Mammary epithelial cell (primary cell): ENCODE measurements at regions of chr7 and their contacts with region 1.

Region 1: DNA sequence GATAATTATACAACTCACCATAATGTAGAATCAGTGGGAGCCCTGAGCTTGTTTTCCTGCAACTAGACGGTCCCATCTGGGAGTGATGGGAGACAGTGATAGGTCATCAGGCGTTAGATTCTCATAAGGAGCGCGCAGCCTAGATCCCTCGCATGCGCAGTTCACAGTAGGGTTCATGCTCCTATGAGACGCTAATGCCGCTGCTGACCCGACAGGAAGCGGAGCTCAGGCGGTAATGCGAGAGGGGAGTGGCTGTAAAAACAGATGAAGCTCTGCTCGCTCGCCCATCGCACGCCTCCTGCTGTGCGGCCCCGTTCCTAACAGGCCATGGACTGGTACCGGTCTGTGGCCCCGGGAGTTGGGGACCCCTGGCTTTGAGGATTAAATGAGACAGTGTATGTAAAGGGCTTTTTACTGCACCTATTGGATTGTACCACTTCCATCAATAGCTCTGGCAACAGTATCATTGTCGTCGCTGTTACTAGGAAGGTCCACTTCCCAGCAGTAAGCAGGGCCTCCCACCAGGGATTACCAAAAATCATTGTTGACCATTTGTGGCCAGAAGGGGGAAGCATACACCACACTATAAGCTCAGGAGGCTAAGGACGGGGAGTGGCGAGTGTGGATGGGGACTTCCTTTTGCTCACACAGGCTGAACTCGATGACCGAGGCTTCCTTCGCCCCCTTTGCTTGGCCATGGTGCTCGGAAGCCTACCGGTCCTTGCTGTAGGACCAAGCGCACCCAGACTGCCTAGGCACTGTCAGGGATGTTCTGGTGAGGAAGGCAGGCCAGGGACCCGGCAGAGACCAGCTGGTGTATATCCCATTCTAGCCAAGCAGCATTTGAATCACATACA is 26.4 kb downstream of the AKR1B1 start:
- DNase-seq: peak; percentile 91
- H3K4me3 ChIP-seq: peak overlapping the region; percentile 35 to 45 (median 45)
- H3K27ac ChIP-seq: peak overlapping the region; percentile 68
- H3K4me1 ChIP-seq: peaks cover 22% of the 10 kb centered on the region
- H3K27me3 ChIP-seq: no peaks in the 10 kb centered on the region
- CTCF ChIP-seq: peak; percentile 54 to 62

Region 2: GRCh38 chr7:134371536-134371935 is 61.0 kb before region 1 on chr7:
- CTCF ChIA-PET with region 1: no interaction called
- dilution Hi-C with region 1: no loop called
- in situ Hi-C with region 1: no loop called
- intact Hi-C with region 1: no loop called
- DNase-seq: peak; percentile 30
- H3K4me3 ChIP-seq: no peak overlapping the region
- H3K27ac ChIP-seq: no peak overlapping the region
- H3K4me1 ChIP-seq: peaks cover 24% of the 10 kb centered on the region
- H3K27me3 ChIP-seq: no peaks in the 10 kb centered on the region
- CTCF ChIP-seq: no peak

Region 3: GRCh38 chr7:134458806-134459698 is 26.5 kb after region 1 on chr7 and contains the start of gene AKR1B1:
- CTCF ChIA-PET with region 1: interaction called, 5 read pairs
- dilution Hi-C with region 1: no loop called
- in situ Hi-C with region 1: no loop called
- intact Hi-C with region 1: loop called (anchors 1 kb)
- DNase-seq: peak; percentile 86
- H3K4me3 ChIP-seq: peak within 1 kb of the TSS; percentile 62 to 71 (median 68)
- H3K27ac ChIP-seq: peak within 1 kb of the TSS; percentile 58
- H3K4me1 ChIP-seq: peaks cover 19% of the 10 kb centered on the region
- H3K27me3 ChIP-seq: no peaks in the 10 kb centered on the region
- CTCF ChIP-seq: peak; percentile 34 to 57
- total RNA-seq, gene AKR1B1: 78.9 to 137 TPM

Region 4: DNA sequence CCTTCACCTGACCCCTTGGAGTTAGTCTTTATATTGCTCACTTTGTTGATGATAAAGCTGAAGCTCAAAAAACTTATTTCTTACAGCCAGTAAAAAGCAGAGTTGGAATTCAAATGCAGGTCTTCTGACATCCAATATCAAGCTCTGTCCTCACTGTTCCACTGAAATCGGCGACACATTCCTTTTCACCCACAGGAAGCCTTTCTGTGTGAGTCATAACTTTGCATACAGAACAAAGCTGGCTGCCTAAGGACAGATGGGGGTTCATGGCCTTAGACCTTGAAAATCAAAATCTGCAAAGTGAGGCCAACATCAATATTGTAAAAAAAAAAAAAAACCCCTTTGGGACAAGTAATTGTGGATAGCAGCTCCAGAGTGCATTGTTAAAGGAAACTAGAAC is 48.2 kb after region 1 on chr7:
- CTCF ChIA-PET with region 1: interaction called, 11 read pairs
- dilution Hi-C with region 1: no loop called
- in situ Hi-C with region 1: no loop called
- intact Hi-C with region 1: loop called (anchors 1 kb)
- DNase-seq: peak; percentile 36
- H3K4me3 ChIP-seq: no peak overlapping the region
- H3K27ac ChIP-seq: no peak overlapping the region
- H3K4me1 ChIP-seq: peaks cover 15% of the 10 kb centered on the region
- H3K27me3 ChIP-seq: no peaks in the 10 kb centered on the region
- CTCF ChIP-seq: no peak

Region 5: GRCh38 chr7:134504660-134505164 is 72.2 kb after region 1 on chr7:
- CTCF ChIA-PET with region 1: interaction called, 3 read pairs
- dilution Hi-C with region 1: no loop called
- in situ Hi-C with region 1: loop called in 1 of 2 experiments (anchors 5 kb)
- intact Hi-C with region 1: no loop called
- DNase-seq: no peak
- H3K4me3 ChIP-seq: no peak overlapping the region
- H3K27ac ChIP-seq: no peak overlapping the region
- H3K4me1 ChIP-seq: peaks cover 11% of the 10 kb centered on the region
- H3K27me3 ChIP-seq: no peaks in the 10 kb centered on the region
- CTCF ChIP-seq: no peak

Region 6: GRCh38 chr7:134547397-134548054 is 115.0 kb after region 1 on chr7:
- CTCF ChIA-PET with region 1: interaction called, 6 read pairs
- dilution Hi-C with region 1: no loop called
- in situ Hi-C with region 1: no loop called
- intact Hi-C with region 1: loop called (anchors 1 kb)
- DNase-seq: peak; percentile 72
- H3K4me3 ChIP-seq: peak overlapping the region; percentile 36 to 45 (median 42)
- H3K27ac ChIP-seq: peak overlapping the region; percentile 70
- H3K4me1 ChIP-seq: peaks cover 22% of the 10 kb centered on the region
- H3K27me3 ChIP-seq: no peaks in the 10 kb centered on the region
- CTCF ChIP-seq: peak; percentile 82 to 86

Region 7: DNA sequence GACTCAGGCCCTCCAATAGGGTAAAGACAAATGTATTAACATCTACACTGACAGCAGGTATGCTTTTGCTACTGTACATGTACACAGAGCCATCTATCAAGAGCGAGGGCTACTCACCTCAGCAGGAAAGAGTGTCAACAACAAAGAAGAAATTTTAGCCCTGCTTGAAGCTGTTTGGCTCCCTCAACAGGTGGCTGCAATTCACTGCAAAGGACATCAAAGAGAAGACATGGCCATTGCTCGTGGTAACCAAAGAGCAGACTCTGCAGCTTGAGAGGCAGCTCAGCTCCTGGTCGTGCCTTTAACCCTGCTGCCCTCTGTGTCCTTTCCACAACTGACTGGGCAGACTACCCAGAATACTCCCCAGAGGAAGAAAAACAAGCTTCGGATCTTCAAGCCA is 121.5 kb after region 1 on chr7:
- CTCF ChIA-PET with region 1: interaction called, 6 read pairs
- dilution Hi-C with region 1: no loop called
- in situ Hi-C with region 1: no loop called
- intact Hi-C with region 1: loop called (anchors 2 kb)
- DNase-seq: peak; percentile 23
- H3K4me3 ChIP-seq: no peak overlapping the region
- H3K27ac ChIP-seq: no peak overlapping the region
- H3K4me1 ChIP-seq: no peaks in the 10 kb centered on the region
- H3K27me3 ChIP-seq: no peaks in the 10 kb centered on the region
- CTCF ChIP-seq: peak; percentile 9 to 61

Region 8: GRCh38 chr7:134605973-134606923 is 173.7 kb after region 1 on chr7:
- CTCF ChIA-PET with region 1: interaction called, 5 read pairs
- dilution Hi-C with region 1: loop called (anchors 25 kb)
- in situ Hi-C with region 1: loop called in 1 of 2 experiments (anchors 10 kb)
- intact Hi-C with region 1: loop called (anchors 1 kb)
- DNase-seq: no peak
- H3K4me3 ChIP-seq: peak overlapping the region in 1 of 3 experiments; percentile 26
- H3K27ac ChIP-seq: no peak overlapping the region
- H3K4me1 ChIP-seq: peaks cover 7% of the 10 kb centered on the region
- H3K27me3 ChIP-seq: no peaks in the 10 kb centered on the region
- CTCF ChIP-seq: peak; percentile 85 to 93